Adrenal gland (tissue), 19 donors: ENCODE measurements at regions of chr16 and their contacts with region 1.

Region 1: DNA sequence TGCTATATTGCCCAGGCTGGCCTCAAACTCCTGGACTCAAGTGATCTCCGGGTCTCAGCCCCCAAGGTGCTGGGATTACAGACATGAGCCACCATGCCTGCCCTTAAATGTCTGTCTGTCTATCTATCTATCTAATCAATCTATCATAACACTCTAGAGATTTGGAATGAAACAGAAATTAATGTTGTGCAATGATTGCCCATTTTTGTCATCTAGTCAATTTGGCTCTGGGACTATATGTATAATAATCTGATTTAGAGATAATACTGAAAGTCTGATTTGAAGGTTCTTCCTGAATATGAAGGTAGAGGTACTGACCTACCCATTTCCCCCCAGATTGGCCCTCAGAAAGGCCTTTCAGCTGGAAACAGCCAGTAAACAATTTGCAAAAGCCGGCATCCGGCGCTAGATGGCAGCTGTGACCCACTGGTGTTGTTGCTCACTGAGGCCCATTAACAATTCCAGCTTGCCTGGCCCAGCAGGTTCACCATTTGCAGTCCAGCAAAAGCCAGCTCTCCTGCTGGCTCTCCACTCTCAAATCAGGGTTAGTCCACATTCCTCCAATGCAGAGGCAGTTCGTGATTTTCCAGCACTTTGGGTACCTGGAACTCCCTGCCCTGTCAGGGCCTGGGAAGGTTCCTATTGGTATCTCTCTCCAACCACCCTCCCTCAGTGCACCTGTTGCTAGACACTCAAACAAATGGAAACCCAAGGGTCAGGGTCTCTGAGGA is 22.9 kb upstream of the C16orf87 start:
- DNase-seq: peak; percentile 75 to 92 (median 87)
- H3K4me3 ChIP-seq: no peak overlapping the region
- H3K27ac ChIP-seq: no peak overlapping the region
- H3K4me1 ChIP-seq: no peaks in the 10 kb centered on the region
- H3K27me3 ChIP-seq: no peaks in the 10 kb centered on the region
- CTCF ChIP-seq: peak; percentile 58 to 91 (median 86)
- POLR2A ChIP-seq: no peak

Region 2: DNA sequence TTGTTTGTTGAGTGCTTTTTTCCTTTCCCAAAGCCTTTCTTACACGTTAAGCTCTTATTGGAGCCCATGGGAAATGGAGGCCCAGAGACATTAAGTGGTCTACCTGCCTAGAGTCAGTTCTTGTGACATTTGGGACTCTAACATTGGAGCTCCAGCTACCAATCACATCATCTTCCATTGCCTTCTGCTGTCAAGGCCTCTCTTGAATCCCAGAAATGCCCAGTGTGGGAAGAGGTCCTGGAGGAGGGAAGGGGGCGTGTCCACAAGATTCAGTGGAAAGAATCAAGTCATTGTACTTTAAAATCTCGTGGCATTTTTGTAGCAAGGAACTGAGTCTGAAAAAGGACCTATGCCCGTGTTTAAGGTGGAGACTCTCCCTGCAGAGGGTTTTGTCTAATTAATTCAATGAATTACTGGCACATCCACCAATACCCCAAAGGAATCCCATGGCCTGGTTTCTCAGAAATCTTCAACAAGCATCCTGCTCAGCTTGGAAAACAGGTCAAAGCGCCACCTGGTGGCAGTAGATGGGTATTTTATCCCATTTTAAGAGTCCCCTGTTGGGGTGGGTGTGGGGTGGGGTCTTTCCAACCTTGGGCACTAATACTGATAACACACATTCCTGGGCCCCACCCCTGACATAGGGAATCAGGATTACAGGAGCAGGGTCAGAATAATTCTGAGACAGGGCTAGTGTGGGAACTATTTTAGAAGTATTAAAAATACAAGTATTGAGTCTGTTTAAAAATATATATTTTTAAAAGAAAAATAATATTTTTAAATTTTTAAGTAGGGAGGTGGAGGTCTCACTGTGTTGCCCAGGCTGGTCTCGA is 54.9 kb after region 1 on chr16:
- intact Hi-C with region 1: loop called (anchors 2 to 5 kb)
- DNase-seq: peak; percentile 38 to 77 (median 48)
- H3K4me3 ChIP-seq: no peak overlapping the region
- H3K27ac ChIP-seq: no peak overlapping the region
- H3K4me1 ChIP-seq: peaks cover 5 to 6% of the 10 kb centered on the region in 2 donors
- H3K27me3 ChIP-seq: no peaks in the 10 kb centered on the region
- CTCF ChIP-seq: peak; percentile 62 to 92 (median 68)
- POLR2A ChIP-seq: no peak

Region 3: GRCh38 chr16:46929378-46930332 is 75.8 kb after region 1 on chr16:
- intact Hi-C with region 1: loop called (anchors 5 kb)
- DNase-seq: peak; percentile 63 to 82 (median 76)
- H3K4me3 ChIP-seq: no peak overlapping the region
- H3K27ac ChIP-seq: no peak overlapping the region
- H3K4me1 ChIP-seq: no peaks in the 10 kb centered on the region
- H3K27me3 ChIP-seq: no peaks in the 10 kb centered on the region
- CTCF ChIP-seq: peak; percentile 76 to 93 (median 82)
- POLR2A ChIP-seq: no peak

Region 4: DNA sequence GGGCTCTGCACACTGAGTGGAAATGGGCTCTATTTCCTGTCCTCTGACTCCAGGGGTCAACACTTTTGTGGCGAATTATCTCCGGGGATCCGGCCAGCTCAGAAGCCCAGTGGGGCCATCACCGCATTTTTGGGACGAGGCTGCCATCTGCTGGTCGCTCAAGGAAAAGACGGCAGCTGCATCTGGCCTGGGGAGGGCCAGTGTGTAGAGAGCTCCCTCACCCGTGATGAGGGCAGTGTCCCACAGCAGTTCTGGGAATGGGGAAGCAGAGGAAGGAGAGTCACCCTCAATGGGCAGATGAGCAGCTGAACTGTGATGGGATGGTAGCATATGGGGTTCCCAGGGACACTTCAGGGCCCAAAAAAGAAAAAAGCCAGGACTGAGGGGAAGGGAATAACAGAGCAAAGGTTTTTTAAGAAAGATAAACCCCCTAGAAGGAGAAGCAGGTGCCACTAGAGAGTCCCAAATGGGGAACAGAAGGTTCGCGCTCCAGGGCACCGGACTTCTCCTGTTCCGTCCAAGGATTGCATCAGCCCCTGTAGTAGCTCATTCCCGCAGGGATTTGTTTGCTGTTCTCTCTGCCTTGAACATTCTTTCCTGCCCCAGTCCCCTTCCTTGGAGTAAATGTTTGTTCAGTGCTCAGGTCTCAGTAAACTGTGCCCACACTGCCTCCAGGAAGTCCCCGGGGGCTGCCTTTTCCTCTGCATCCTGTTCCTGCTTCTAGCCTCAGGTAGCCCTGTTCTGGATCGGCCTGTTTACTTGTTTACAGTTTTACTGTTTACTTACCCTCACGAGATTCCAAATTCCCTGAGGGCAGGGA is 1311.2 kb after region 1 on chr16:
- intact Hi-C with region 1: loop called in 1 of 2 experiments (anchors 10 kb)
- DNase-seq: peak; percentile 62 to 82 (median 70)
- H3K4me3 ChIP-seq: no peak overlapping the region
- H3K27ac ChIP-seq: no peak overlapping the region
- H3K4me1 ChIP-seq: no peaks in the 10 kb centered on the region
- H3K27me3 ChIP-seq: no peaks in the 10 kb centered on the region
- CTCF ChIP-seq: peak; percentile 67 to 88 (median 80)
- POLR2A ChIP-seq: no peak